AG04449 (cell line): ENCODE measurements at regions of chr3 and their contacts with region 1.

Region 1: DNA sequence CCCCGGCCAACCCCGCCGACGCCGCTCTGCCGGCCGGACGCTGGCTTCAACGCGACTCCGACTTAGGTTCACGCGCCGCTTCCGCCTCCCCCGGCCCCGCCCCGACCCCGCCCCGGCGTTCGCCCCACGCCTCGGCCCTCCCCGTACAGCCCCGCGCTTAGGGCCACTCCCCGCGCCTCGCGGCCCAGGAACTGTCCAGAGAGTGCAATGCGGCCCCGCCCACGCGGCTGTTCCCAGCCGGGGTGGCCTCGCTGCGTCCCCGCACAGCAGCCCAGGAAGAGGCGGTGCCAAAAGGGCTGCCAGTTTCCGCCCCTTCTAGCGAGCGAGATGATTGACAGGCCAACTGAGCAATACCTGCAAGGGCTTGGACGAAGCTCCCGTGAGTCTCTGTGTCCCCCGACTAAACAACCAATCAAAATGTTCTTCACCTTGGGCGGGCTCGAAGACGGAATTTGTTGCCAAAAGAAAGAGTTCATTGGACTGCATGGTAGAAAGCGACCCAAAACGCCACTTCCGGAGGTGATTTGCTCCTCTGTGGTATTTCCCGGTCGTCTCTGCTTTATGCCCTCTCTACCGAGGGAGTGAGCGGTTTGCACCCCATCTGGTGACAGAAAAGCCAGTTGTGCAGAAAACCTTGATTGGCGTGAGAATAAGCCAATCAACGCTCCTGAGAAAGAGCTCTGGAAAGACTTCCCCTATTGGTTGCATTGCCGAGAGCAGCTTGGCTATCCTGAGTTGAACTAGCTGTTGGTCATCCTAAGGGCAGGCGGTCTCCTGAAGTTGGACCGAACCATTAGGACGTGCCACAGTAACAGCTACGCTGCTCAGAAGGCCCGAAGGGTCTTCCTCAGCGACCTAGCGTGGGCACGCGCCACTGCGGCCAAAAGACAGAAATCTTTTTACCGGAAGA is at the start of gene UBP1:
- DNase-seq: peak; percentile 100
- H3K4me3 ChIP-seq: peak within 1 kb of the TSS; percentile 88
- CTCF ChIP-seq: no peak

Region 2: GRCh38 chr3:33428734-33429133 is 11.8 kb before region 1 on chr3:
- CTCF ChIA-PET with region 1: interaction called, 12 read pairs
- POLR2A ChIA-PET with region 1: no interaction called
- DNase-seq: no peak
- H3K4me3 ChIP-seq: no peak overlapping the region
- CTCF ChIP-seq: no peak

Region 3: GRCh38 chr3:33810545-33810944 is 370.0 kb after region 1 on chr3:
- CTCF ChIA-PET with region 1: no interaction called
- POLR2A ChIA-PET with region 1: no interaction called
- DNase-seq: no peak
- H3K4me3 ChIP-seq: no peak overlapping the region
- CTCF ChIP-seq: no peak